Psoas muscle (tissue), 8 donors: ENCODE measurements at regions of chr20 and their contacts with region 1.

Region 1: DNA sequence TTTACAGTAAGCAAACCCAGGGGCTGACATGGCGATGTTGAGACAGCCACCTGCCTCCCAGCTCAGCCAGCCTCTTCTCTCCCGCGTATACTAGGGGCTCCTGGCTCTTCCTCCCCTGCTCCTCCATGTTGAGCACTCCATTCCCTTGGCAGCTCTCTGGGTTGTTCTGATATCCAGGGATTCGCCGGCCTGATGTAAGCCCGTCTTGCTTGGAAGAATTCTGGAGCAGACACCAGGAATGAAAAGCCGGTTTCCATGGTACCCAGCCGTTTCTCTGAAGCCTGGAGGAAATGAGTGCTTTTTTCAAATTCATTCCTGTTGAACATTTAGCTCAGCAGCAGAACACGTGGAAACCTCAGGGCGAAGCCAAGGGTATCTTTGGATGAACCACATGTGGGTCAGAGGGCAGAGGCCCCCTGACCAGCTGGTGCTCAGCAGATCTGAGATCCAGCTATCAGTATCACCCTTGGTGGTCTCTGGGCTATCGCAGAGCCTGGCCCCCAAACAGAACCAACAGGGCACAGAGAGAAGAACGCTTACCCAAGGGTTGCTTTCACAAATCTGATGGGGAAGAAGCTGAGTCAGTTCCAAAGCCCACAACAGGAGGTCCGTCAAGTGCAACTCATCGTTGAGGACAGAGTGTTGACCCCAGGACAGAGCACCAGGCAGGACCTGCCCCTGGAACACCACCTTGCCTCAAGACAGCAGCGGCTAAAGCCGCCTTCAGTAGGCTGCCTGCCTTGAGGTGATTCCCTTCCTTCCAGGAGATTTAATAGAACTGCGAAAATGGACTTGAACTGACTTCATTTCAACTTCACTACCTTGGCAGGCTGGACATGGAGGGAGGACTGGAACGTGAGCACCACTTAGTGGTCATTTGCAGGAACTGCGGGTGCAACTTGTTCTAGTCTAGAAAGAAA is 96.1 kb upstream of the RIN2 start:
- DNase-seq: peak; percentile 29 to 70
- ATAC-seq: peak; percentile 81 to 96 (median 85)
- H3K4me3 ChIP-seq: no peak overlapping the region
- H3K27ac ChIP-seq: no peak overlapping the region
- H3K4me1 ChIP-seq: no peaks in the 10 kb centered on the region
- H3K27me3 ChIP-seq: no peaks in the 10 kb centered on the region
- CTCF ChIP-seq: peak; percentile 100

Region 2: DNA sequence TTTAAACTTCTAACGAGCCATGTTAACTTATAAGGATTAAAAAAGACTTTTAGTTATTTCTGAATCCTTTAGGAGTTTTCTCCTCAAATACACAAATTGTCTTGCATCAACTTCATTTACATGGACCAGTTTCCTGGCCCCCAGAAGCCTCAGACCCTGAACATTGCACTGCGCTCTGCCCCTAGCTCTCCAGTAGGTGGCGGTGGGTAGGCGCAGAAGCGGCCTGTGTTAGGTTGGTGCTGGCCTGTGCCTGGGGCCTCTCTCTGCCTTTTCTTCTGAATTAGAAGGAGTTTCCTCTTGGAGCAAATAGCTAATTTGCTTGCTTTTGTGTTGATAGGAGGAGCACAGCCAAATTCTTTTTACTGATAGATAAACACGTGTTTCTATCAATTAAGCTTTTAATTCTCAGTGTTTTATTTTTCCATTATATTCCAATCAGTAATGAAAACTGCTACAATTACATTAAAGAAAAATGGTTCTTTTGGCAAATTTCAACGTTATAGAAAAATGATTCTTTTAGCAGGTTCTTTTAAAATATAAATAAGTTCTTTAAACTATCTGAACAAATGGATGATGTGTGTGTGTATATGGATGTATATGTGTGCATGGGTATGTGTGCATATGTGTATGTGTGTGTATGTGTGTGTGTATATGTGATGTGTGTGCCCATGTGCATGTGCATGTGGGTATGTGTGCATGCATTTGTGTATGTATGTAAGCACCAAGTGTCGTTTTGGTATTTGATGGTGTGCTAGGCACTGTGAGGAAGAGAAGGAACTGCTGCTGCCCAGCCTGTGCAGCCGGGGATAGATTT is 1029.6 kb before region 1 on chr20:
- intact Hi-C with region 1: loop called in 1 of 2 experiments (anchors 10 kb)
- DNase-seq: peak; percentile 59 to 76
- ATAC-seq: peak; percentile 90 to 98 (median 92)
- H3K4me3 ChIP-seq: no peak overlapping the region
- H3K27ac ChIP-seq: no peak overlapping the region
- H3K4me1 ChIP-seq: peaks cover 3% of the 10 kb centered on the region
- H3K27me3 ChIP-seq: no peaks in the 10 kb centered on the region
- CTCF ChIP-seq: peak; percentile 92

Region 3: GRCh38 chr20:19205977-19206396 is 456.0 kb before region 1 on chr20:
- intact Hi-C with region 1: loop called (anchors 1 to 5 kb)
- DNase-seq: peak; percentile 75 to 87
- ATAC-seq: peak; percentile 76 to 94 (median 82)
- H3K4me3 ChIP-seq: no peak overlapping the region
- H3K27ac ChIP-seq: no peak overlapping the region
- H3K4me1 ChIP-seq: no peaks in the 10 kb centered on the region
- H3K27me3 ChIP-seq: no peaks in the 10 kb centered on the region
- CTCF ChIP-seq: peak; percentile 92

Region 4: GRCh38 chr20:19473922-19474286 is 188.1 kb before region 1 on chr20:
- intact Hi-C with region 1: loop called in 1 of 2 experiments (anchors 10 kb)
- DNase-seq: no peak
- ATAC-seq: peak in 1 of 4 donors; percentile 28
- H3K4me3 ChIP-seq: no peak overlapping the region
- H3K27ac ChIP-seq: no peak overlapping the region
- H3K4me1 ChIP-seq: no peaks in the 10 kb centered on the region
- H3K27me3 ChIP-seq: no peaks in the 10 kb centered on the region
- CTCF ChIP-seq: no peak

Region 5: DNA sequence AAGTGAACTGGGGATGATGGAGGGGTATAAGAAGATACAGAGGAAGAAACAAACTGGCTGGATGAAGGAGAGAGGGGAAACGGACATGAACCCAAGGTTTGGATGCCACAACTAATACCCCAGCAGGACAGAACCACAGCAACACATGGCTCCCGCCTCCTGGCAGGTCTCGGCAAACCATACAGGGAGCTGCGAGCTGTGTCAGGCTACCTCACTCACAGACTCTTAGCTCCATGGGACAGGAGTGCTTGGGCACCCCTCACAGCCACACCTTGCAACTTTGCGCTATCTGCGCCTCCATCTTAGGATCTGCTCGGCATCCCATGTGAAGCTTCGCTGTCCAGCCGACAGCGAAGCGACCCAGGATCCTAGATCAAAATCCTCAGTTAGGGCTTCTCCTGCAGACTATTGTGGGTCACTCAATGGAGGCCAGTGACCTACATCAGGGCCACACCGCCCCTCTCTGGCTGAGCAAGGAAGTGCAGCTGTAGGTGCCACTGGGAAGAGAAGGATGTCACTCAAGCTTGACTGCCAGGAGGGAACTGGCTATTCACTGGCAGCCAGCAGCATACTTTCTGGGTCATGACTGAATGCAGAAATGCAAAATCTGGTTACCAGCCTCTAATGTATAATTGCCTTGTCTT is 78.3 kb before region 1 on chr20:
- intact Hi-C with region 1: loop called in 1 of 2 experiments (anchors 2 kb)
- DNase-seq: peak; percentile 59 to 84
- ATAC-seq: peak; percentile 93 to 97 (median 94)
- H3K4me3 ChIP-seq: no peak overlapping the region
- H3K27ac ChIP-seq: no peak overlapping the region
- H3K4me1 ChIP-seq: peaks cover 5% of the 10 kb centered on the region
- H3K27me3 ChIP-seq: no peaks in the 10 kb centered on the region
- CTCF ChIP-seq: peak; percentile 92

Region 6: GRCh38 chr20:19628570-19629169 is 33.3 kb before region 1 on chr20:
- intact Hi-C with region 1: loop called (anchors 2 kb)
- DNase-seq: no peak
- ATAC-seq: peak; percentile 69 to 87 (median 78)
- H3K4me3 ChIP-seq: no peak overlapping the region
- H3K27ac ChIP-seq: no peak overlapping the region
- H3K4me1 ChIP-seq: no peaks in the 10 kb centered on the region
- H3K27me3 ChIP-seq: no peaks in the 10 kb centered on the region
- CTCF ChIP-seq: peak; percentile 62

Region 7: GRCh38 chr20:19706463-19706862 is 44.5 kb after region 1 on chr20:
- intact Hi-C with region 1: no loop called
- DNase-seq: no peak
- ATAC-seq: no peak
- H3K4me3 ChIP-seq: no peak overlapping the region
- H3K27ac ChIP-seq: no peak overlapping the region
- H3K4me1 ChIP-seq: no peaks in the 10 kb centered on the region
- H3K27me3 ChIP-seq: no peaks in the 10 kb centered on the region
- CTCF ChIP-seq: no peak

Region 8: DNA sequence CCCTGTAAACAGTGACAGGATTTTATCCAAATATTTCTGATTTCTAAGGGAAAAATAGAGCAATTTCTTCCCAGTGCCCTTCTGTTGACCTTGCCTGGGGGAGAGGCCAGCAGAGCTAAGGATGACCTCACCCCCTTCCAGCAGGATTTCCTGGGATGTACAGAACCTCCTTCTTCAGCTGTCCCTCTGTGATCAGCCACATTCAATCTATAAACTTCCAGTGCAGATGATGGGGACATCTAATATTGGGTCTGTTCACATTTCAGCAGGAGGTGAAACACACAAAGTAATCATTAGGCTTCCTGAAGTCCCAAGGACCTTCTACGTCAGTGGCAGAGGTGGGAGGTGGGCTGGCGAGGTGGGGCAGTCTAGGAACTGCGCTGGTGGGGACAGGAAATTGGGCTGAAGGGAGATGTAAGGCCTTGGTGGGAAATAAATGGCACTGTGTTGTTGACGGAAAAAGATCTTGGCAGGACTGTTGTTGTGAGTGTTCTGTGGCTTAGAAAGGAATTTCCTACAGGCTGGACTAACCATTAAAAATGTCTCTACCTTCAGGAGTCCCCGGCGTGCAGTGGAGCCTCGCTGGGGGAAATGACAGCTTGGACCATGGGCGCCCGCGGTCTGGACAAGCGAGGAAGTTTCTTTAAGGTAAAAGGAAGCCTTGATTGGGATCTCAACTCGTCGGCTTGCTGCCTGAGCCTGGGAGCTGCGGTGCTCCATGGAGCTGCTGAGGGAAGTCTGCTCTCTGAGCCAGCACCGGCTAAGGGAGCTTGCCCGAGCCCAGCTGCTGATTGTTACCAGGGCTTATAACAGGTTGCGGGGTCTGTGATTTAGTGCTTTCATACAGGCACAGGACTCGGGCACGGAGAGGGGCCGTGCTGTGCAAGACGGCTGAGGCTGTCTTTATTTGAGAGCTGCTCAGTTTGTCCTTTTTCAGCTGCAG is 227.3 kb after region 1 on chr20:
- intact Hi-C with region 1: no loop called
- DNase-seq: peak; percentile 40 to 75
- ATAC-seq: peak; percentile 58 to 74 (median 68)
- H3K4me3 ChIP-seq: peak overlapping the region; percentile 55
- H3K27ac ChIP-seq: peak overlapping the region; percentile 86
- H3K4me1 ChIP-seq: peaks cover 64% of the 10 kb centered on the region
- H3K27me3 ChIP-seq: no peaks in the 10 kb centered on the region
- CTCF ChIP-seq: no peak